T-cell (primary cell): ENCODE measurements at regions of chr17 and their contacts with region 1.

Region 1: GRCh38 chr17:49223517-49224197 is 6.9 kb downstream of the PHOSPHO1 start:
- DNase-seq: peak in 30 of 35 experiments; percentile 17 to 75 (median 52)
- ATAC-seq: peak; percentile 20 to 36 (median 28)
- H3K4me3 ChIP-seq: peak overlapping the region; percentile 44 to 70
- H3K4me3 Mint-ChIP-seq: peak overlapping the region; percentile 62 to 82 (median 76)
- H3K27ac ChIP-seq: no peak overlapping the region
- H3K27ac Mint-ChIP-seq: no peak overlapping the region
- H3K4me1 ChIP-seq: peaks cover 15 to 73% of the 10 kb centered on the region in 2 experiments
- H3K4me1 Mint-ChIP-seq: peaks cover 34 to 53% (median 40%) of the 10 kb centered on the region in 3 donors
- H3K27me3 ChIP-seq: peaks cover 0 to 18% of the 10 kb centered on the region in 2 experiments
- H3K27me3 Mint-ChIP-seq: peaks cover 0 to 10% of the 10 kb centered on the region in 2 donors

Region 2: GRCh38 chr17:49003623-49004511 is 219.8 kb before region 1 on chr17:
- CTCF ChIA-PET with region 1: interaction called in 1 of 2 experiments, 11 read pairs
- POLR2A ChIA-PET with region 1: no interaction called
- DNase-seq: no peak
- ATAC-seq: no peak
- H3K4me3 ChIP-seq: no peak overlapping the region
- H3K4me3 Mint-ChIP-seq: no peak overlapping the region
- H3K27ac ChIP-seq: no peak overlapping the region
- H3K27ac Mint-ChIP-seq: no peak overlapping the region
- H3K4me1 ChIP-seq: peaks cover 0 to 3% of the 10 kb centered on the region in 2 experiments
- H3K4me1 Mint-ChIP-seq: peaks cover 3 to 12% (median 8%) of the 10 kb centered on the region in 3 donors
- H3K27me3 ChIP-seq: peaks cover 5 to 37% of the 10 kb centered on the region in 2 experiments
- H3K27me3 Mint-ChIP-seq: peaks cover 82 to 92% of the 10 kb centered on the region in 2 donors

Region 3: DNA sequence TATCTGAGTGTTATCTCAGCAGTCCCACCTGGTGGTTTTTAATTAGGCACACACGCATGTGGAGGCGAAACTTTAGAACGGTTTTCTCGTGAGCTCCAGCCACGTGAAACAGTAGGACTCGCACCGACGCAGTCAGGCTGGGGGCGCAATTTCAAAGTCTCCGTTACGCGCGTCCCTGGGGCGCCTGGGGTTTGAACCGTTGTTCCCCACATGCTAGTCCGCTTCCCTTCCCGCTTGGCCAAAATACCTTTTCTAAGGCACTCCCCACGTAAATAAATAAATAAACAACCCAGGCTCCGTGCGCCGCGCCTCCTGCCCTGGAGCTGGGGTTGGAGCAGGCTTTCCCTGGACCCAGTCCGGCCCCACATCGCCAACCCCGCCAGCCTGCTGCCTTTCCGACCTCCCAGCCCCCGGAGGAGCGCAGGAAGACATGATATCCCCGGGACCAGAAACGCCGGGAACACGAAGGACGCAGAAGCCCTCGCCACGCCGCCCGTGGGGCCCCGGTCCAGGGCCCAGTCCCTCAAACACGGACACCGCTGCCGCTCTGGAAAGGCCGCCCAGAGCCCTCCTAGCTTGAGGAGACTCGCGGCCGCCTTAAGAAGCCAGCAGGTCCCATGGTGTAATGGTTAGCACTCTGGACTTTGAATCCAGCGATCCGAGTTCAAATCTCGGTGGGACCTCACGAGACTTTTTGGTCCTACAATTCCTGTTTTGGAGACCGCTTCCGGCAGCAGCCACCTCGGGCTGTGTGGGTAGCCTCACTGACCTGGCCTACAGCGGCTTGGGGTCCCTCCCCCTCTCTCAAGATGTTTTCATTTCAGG is 31.5 kb before region 1 on chr17:
- CTCF ChIA-PET with region 1: interaction called, 4 to 21 read pairs
- POLR2A ChIA-PET with region 1: interaction called in 1 of 2 experiments, 5 read pairs
- DNase-seq: peak; percentile 63 to 99 (median 88)
- ATAC-seq: peak; percentile 60 to 65 (median 64)
- H3K4me3 ChIP-seq: peak overlapping the region; percentile 80 to 87
- H3K4me3 Mint-ChIP-seq: peak overlapping the region; percentile 83 to 96 (median 89)
- H3K27ac ChIP-seq: peak overlapping the region; percentile 91
- H3K27ac Mint-ChIP-seq: peak overlapping the region; percentile 95 to 99
- H3K4me1 ChIP-seq: peaks cover 4 to 27% of the 10 kb centered on the region in 2 experiments
- H3K4me1 Mint-ChIP-seq: peaks cover 23 to 35% (median 31%) of the 10 kb centered on the region in 3 donors
- H3K27me3 ChIP-seq: no peaks in the 10 kb centered on the region
- H3K27me3 Mint-ChIP-seq: no peaks in the 10 kb centered on the region